Natural killer cell (primary cell): ENCODE measurements at regions of chr6 and their contacts with region 1.

Region 1: GRCh38 chr6:26537846-26538571 is at the start of gene HMGN4:
- DNase-seq: peak; percentile 73 to 97
- ATAC-seq: peak; percentile 60 to 80 (median 69)
- H3K4me3 ChIP-seq: peak within 1 kb of the TSS; percentile 87
- H3K4me3 Mint-ChIP-seq: peak within 1 kb of the TSS; percentile 95
- H3K27ac ChIP-seq: peak within 1 kb of the TSS; percentile 89
- H3K27ac Mint-ChIP-seq: peak within 1 kb of the TSS; percentile 99 to 100
- H3K4me1 ChIP-seq: peaks cover 37% of the 10 kb centered on the region
- H3K4me1 Mint-ChIP-seq: peaks cover 67 to 68% of the 10 kb centered on the region in 2 donors
- H3K27me3 ChIP-seq: no peaks in the 10 kb centered on the region
- H3K27me3 Mint-ChIP-seq: peaks cover 8% of the 10 kb centered on the region in 2 donors
- CTCF ChIP-seq: no peak
- total RNA-seq, gene HMGN4: 55.7 to 80.6 (median 70.3) TPM

Region 2: GRCh38 chr6:26175428-26176181 is 362.4 kb before region 1 on chr6:
- intact Hi-C with region 1: loop called (anchors 5 kb)
- DNase-seq: peak in 1 of 2 donors; percentile 87
- ATAC-seq: no peak
- H3K4me3 ChIP-seq: no peak overlapping the region
- H3K4me3 Mint-ChIP-seq: peak overlapping the region; percentile 78
- H3K27ac ChIP-seq: peak overlapping the region; percentile 6
- H3K27ac Mint-ChIP-seq: peak overlapping the region; percentile 77 to 83
- H3K4me1 ChIP-seq: peaks cover 17% of the 10 kb centered on the region
- H3K4me1 Mint-ChIP-seq: peaks cover 37 to 39% of the 10 kb centered on the region in 2 donors
- H3K27me3 ChIP-seq: no peaks in the 10 kb centered on the region
- H3K27me3 Mint-ChIP-seq: no peaks in the 10 kb centered on the region
- CTCF ChIP-seq: peak; percentile 86

Region 3: DNA sequence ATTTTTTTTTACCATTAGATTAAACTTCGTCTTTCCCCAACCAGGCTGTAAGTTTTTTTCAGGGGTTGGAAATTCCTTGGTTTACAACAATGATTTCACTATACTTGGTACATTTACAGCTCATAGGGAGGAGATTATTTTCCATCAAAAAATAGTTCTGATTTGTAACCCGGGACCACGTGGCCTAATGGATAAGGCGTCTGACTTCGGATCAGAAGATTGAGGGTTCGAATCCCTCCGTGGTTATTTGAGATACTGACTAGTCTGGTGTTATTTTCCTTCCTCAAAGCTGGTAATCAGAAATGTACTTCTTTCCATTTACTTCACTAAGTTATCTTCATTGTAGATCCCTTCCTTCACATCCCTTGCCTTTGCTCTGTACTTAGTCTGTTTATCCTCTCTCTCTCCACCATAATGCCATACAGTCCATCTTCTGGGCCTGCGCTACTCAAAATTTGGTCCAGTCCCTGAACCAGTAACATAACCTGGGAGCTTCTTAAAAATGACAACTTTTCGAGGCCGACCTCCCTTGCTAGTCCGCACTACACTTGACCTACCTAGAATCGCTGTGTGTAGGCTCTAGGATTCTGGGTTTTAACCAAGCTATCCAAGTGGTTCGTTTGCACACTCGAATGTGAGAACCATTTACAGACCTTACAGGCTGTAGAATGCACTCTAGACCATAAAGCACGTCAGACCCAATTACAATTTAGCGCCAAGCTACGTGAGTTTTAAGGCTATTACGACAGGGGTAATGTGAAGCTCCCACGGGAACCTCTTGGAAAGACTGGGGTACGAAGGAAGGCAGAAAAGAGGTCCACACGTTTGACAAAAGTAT is 215.1 kb before region 1 on chr6:
- intact Hi-C with region 1: loop called (anchors 5 kb)
- DNase-seq: peak in 1 of 2 donors; percentile 85
- ATAC-seq: peak; percentile 72 to 76 (median 75)
- H3K4me3 ChIP-seq: peak overlapping the region; percentile 47
- H3K4me3 Mint-ChIP-seq: peak overlapping the region; percentile 68
- H3K27ac ChIP-seq: no peak overlapping the region
- H3K27ac Mint-ChIP-seq: peak overlapping the region; percentile 86 to 92
- H3K4me1 ChIP-seq: peaks cover 16% of the 10 kb centered on the region
- H3K4me1 Mint-ChIP-seq: peaks cover 25 to 27% of the 10 kb centered on the region in 2 donors
- H3K27me3 ChIP-seq: peaks cover 15% of the 10 kb centered on the region
- H3K27me3 Mint-ChIP-seq: peaks cover 32 to 38% of the 10 kb centered on the region in 2 donors
- CTCF ChIP-seq: no peak

Region 4: DNA sequence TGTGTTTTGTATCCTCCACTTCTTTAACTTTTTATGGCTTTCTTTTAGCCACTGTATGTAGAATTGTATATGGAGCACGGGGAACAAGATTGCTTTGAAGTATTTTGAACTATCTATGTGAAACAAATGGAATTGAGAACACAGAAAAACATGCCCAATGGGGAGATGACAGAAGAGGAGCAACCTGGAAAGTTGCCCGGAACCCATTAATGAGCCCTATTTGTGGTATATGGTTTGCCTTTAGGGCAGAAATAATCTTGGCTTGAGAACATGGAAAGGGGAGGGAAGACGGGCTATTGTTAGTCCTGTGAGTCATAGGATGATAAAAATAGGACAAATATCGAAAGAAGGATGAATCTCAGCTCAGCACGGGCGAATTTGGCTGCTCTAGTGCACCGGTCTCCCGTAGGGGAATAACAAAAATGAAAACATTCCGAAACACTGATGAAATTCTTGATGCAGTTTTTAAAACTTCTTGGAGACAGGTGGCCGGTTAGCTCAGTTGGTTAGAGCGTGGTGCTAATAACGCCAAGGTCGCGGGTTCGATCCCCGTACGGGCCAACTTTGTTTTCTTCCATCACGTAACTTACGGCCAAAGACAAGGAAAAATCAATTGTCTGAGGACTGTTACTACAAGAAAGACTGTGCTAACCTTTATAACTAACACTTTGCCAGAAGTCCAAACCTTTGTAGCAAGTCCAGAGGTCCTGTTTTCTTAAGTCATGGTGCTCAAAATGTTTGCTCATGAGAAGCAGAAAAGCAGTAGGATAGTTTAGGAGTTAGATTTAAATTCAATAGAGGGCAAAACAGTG is 15.8 kb after region 1 on chr6:
- intact Hi-C with region 1: loop called (anchors 1 kb)
- DNase-seq: peak; percentile 77 to 91
- ATAC-seq: peak; percentile 51 to 62 (median 61)
- H3K4me3 ChIP-seq: peak overlapping the region; percentile 71
- H3K4me3 Mint-ChIP-seq: no peak overlapping the region
- H3K27ac ChIP-seq: peak overlapping the region; percentile 65
- H3K27ac Mint-ChIP-seq: no peak overlapping the region
- H3K4me1 ChIP-seq: peaks cover 23% of the 10 kb centered on the region
- H3K4me1 Mint-ChIP-seq: peaks cover 24 to 25% of the 10 kb centered on the region in 2 donors
- H3K27me3 ChIP-seq: no peaks in the 10 kb centered on the region
- H3K27me3 Mint-ChIP-seq: no peaks in the 10 kb centered on the region
- CTCF ChIP-seq: no peak

Region 5: DNA sequence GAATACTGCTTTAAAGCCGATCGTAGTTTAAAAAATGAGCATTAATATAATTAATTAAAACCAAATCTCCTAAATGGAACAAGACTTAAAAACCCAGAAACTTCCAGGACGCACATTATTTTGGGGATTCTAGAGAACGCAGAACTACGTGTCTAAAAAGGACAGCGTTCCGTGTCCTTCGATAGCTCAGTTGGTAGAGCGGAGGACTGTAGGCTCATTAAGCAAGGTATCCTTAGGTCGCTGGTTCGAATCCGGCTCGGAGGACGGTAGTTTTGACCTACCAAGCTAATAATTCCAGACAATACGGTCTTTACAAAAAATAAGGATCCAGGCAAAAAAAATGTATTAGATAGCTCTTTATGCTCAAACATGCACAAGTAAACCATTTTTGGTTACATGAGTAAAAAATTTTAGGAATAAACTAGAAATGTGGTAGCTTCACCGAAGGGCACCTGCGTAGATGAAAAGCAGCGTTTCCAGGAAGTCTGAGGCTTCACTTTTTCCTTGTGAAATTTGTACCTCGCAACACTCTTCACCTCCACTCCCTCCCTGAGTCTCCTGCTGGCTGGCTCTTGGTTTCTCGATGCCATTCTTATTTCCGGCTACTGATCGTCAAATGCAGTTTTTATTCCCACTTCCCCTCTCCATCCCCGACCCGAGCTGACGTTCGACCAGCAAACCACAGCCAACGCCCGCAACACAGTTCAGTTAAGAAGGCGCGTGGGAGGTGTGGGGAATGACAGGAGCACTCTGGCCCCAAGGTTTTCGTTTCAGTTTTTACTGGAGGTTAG is 39.1 kb after region 1 on chr6:
- intact Hi-C with region 1: no loop called
- DNase-seq: peak; percentile 48 to 80
- ATAC-seq: peak in 2 of 3 donors; percentile 67 to 73
- H3K4me3 ChIP-seq: peak overlapping the region; percentile 4
- H3K4me3 Mint-ChIP-seq: peak overlapping the region; percentile 88
- H3K27ac ChIP-seq: no peak overlapping the region
- H3K27ac Mint-ChIP-seq: peak overlapping the region; percentile 87 to 93
- H3K4me1 ChIP-seq: peaks cover 18% of the 10 kb centered on the region
- H3K4me1 Mint-ChIP-seq: peaks cover 17 to 22% of the 10 kb centered on the region in 2 donors
- H3K27me3 ChIP-seq: peaks cover 3% of the 10 kb centered on the region
- H3K27me3 Mint-ChIP-seq: peaks cover 30 to 47% of the 10 kb centered on the region in 2 donors
- CTCF ChIP-seq: no peak

Region 6: DNA sequence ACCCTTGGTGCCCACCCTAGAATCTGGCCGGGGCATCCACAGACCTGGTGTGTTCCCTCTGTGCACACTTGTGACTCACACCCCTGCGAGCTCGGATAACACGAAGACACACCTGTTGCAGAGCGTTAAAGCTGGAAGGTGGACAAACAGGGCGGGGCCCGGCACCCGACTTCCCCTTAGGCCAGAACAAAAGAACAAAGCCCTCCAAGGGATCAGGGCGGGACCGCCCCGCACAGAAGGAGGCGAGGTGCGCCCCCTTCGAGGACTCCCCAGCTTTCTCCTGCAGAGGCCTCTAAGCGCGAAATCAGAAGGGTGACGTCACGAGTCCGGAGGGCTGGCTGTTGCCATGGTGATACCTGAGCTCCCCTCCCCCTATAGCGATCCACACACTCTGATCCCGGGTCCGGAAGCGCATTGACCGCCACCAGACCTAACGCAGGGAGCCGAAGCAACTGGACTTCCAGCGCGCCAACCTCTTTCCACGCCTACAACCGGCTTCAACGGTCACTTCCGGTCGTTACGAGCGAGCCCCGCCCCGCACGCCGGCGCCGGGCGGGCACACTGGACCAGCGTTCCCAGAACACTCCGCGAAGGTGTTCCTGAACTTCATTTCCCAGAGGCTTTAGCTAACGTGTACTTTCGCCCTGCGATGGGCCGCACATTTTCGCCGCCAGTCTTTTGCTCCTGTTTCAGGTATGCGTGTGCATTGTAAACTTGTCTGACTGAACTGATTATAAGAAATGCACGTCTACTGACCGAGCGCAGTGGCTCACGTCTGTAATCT is 934.8 kb after region 1 on chr6 and contains the start of gene ZNF184:
- intact Hi-C with region 1: loop called (anchors 10 kb)
- DNase-seq: peak; percentile 84 to 92
- ATAC-seq: peak; percentile 78 to 94 (median 86)
- H3K4me3 ChIP-seq: peak within 1 kb of the TSS; percentile 65
- H3K4me3 Mint-ChIP-seq: peak within 1 kb of the TSS; percentile 96
- H3K27ac ChIP-seq: peak within 1 kb of the TSS; percentile 85
- H3K27ac Mint-ChIP-seq: peak within 1 kb of the TSS; percentile 94
- H3K4me1 ChIP-seq: peaks cover 17% of the 10 kb centered on the region
- H3K4me1 Mint-ChIP-seq: peaks cover 40 to 48% of the 10 kb centered on the region in 2 donors
- H3K27me3 ChIP-seq: no peaks in the 10 kb centered on the region
- H3K27me3 Mint-ChIP-seq: no peaks in the 10 kb centered on the region
- CTCF ChIP-seq: no peak
- total RNA-seq, gene ZNF184: 12.8 to 21.7 (median 16.2) TPM